BJ (cell line): ENCODE measurements at regions of chr10 and their contacts with region 1.

Region 1: DNA sequence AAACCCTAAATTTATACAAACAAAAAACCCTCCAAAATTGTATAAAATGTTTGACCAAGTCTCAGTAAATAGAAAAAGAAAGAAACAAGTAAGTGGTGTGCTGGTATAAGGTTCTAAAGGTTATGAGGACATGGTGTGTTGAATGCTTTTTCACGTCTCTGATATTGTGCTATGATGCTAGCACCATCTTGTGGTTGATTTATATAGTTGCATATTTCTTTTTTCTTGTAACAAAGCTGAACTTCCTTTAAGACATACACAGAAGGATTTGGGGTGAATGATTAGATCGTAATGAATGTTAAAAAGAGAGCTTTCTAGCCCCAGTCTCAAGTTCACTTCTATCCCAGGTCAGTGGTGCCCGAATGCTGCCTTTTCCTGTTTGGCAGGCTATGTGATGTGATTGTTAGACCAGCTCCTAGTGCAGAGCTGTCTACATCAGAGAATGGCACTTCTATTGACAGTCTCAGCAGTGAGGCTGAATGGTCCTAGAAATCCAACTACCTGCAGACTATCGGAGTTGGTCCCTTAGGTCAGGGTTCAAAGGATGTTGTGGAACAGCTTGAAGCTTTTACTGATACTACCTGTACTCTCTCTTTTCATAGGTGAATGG is 25.0 kb downstream of the VTI1A start:
- DNase-seq: no peak
- H3K4me3 ChIP-seq: no peak overlapping the region
- H3K27me3 ChIP-seq: no peaks in the 10 kb centered on the region
- CTCF ChIP-seq: peak; percentile 66

Region 2: DNA sequence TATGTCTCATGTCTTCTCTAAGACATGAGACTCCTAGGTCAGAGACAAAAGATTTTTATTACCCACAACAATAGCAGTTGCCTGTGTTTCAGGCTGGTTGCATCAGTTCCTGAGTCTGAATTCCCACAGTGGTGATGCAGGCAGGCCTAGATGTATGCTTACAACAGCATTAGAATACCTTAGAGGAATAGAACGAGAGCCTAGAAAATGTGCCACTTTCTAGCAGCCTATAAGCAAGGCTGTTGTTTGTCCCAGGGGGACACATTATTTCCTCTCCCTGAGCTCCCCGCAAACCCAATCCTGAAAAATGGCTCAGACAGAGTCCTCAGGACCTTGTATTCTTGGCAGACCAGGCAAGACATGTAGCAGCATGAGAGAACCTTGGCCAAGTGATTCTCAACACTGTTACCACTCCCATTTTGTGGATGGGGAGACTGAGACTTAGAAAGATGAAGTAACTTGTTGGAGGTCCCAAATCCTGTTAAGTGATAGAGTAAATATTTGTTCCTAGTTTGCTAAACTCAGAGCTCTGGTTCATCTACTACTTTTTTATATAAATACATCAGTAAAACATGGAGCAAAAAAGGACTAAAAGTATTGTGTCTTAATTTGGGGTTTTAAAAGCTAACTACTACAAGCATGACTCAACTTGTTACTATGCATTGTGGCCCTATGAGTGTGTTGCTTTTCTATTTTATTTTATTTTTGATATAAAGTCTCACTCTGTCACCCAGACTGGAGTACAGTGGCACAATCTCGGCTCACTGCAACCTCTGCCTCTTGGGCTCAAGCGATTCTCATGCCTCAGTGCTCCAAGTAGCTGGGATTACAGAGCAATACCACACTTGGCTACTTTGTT is 10.7 kb before region 1 on chr10:
- CTCF ChIA-PET with region 1: interaction called, 11 read pairs
- POLR2A ChIA-PET with region 1: no interaction called
- DNase-seq: no peak
- H3K4me3 ChIP-seq: no peak overlapping the region
- H3K27me3 ChIP-seq: no peaks in the 10 kb centered on the region
- CTCF ChIP-seq: no peak

Region 3: DNA sequence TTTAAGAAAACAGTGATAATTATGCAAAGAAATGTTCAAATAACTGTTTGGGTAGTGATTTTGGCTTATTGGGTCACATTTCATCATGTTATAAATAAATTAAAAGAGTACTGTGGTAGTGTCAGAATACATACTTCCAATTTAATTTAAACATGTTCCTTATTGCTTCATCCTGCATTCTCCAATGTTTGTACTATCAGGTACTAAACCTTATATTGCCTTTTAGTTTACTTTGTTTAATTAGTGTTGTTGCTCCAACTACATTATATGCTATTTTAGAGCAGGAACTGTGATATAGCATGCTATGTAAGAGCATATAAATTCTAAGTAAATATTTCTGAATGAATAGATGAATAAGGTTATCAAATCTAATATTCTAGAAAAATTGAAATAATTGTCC is 16.0 kb after region 1 on chr10:
- CTCF ChIA-PET with region 1: interaction called, 10 read pairs
- POLR2A ChIA-PET with region 1: no interaction called
- DNase-seq: no peak
- H3K4me3 ChIP-seq: no peak overlapping the region
- H3K27me3 ChIP-seq: no peaks in the 10 kb centered on the region
- CTCF ChIP-seq: no peak

Region 4: DNA sequence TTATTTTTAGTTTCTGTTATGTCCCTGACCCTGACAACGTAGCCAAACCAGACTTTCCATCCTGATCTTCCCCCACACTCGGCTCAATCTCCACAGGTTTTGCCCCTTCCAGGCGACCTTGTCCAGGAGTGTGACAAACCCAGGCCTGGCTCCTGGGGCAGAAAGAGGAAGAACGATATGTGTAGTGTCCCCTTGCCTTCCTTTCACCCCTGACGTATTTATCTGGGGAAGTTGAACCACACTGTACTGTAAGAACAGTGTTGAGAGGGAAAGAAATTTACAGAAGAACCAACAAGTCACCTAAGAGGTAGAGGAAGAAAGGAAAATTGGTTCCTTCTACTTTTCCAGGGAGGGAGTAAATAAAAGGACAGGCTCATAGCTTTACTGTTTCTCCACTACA is 133.1 kb after region 1 on chr10:
- CTCF ChIA-PET with region 1: no interaction called
- POLR2A ChIA-PET with region 1: no interaction called
- DNase-seq: no peak
- H3K4me3 ChIP-seq: no peak overlapping the region
- H3K27me3 ChIP-seq: no peaks in the 10 kb centered on the region
- CTCF ChIP-seq: no peak